ENCODE measurements at regions of chr3 and their contacts with region 1.

Region 1: DNA sequence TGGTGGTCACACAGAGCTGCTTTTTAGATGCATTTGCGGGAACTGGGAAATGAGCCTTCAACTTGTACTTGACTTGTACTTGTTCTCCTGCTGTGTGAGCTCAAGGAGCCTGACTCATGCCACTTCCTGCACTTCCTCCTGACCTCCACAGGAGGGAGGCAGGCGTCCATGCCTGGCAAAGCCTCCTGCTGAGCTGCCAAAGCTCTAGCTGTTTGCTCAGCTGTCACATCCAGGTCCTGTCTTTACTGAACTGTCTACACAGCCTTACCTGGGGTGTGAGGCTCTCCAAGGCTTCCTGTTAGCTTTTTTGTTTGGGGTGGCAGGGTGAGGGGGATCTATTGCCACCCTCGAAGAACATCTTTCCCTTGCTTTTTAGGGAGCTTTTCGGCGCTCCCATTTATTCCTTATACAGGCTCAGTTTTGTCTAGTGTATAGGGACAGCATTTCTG is 6.4 kb downstream of the THPO start:
- DNase-seq: peak; percentile 81
- ATAC-seq: peak; percentile 84 to 89

Region 2: GRCh38 chr3:184513276-184514170 is 141.9 kb after region 1 on chr3:
- intact Hi-C with region 1: loop called (anchors 1 to 10 kb)
- DNase-seq: peak; percentile 88
- ATAC-seq: peak; percentile 99

Region 3: DNA sequence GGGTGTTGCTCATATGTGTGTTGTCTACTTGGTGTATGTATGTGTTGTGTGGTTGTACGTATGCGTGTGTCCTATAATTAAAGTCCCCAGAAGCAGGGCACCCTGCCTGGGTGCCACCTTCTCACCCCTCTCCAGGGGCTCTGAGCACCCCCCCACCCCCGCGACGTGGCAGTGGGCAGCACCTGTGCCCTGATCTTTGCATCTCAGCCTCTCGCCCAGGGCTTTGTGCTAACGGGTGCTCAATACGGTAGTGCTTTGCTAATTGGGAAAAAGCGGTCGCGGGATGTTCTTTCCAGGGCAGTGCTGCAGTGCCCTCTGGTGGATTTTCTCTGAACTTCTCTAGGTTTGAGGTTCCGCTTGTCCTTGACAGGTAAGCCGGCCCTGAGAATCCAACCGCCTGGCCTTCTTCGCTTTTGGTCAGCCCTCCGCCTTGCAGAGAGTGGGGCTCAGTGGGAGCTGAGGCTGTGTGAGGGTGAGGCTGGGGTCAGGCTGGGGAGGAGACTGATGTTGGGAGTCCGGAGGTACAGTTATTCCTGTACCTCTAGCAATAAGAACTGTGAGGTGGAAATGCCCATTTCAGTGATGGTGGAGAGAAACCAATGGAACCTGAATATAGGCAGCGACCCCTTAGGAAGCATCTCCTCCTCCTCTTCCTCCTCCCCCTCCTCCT is 172.4 kb after region 1 on chr3:
- intact Hi-C with region 1: loop called (anchors 2 to 10 kb)
- DNase-seq: peak; percentile 64
- ATAC-seq: peak; percentile 68 to 88

Region 4: DNA sequence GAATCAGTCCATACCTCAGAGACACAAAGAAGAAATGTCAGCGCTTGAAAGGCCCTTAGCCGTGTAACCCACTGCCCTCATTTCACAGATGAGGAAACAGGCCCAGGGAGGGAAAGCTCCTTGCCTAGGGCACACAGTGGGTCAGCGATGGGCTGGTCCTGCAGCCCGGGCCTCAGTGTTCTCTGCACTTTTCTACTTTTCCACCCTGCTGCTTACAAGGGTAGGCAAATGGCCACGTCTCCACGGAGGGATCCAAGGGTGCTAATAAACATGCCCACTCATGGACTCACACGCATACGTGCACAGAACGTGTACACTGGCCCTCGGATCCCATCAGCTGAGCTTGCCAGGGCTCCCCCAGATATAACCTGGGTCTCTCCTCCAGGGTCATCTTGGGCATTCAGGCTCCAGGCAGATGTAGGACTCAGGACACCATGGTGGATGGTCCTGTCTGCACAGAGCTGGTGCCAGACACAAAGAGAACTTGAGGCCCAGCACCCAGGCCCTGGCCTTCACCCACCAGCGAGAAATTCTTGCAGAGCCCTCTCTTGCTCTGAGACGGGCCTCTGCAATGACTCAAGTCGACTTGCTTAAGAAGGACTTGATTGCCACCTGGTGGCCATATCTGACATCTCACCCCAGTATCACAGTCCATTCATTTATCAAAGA is 405.9 kb after region 1 on chr3:
- intact Hi-C with region 1: loop called in 1 of 2 experiments (anchors 10 kb)
- DNase-seq: peak; percentile 92
- ATAC-seq: peak; percentile 90

Measured in left cardiac atrium (tissue), 4 donors.